ENCODE measurements at regions of chrX and their contacts with region 1.

Region 1: GRCh38 chrX:1749499-1749898 is 134.6 kb downstream of the ASMT start:
- DNase-seq: no peak
- H3K4me3 ChIP-seq: no peak overlapping the region
- H3K27ac ChIP-seq: no peak overlapping the region
- H3K4me1 ChIP-seq: no peaks in the 10 kb centered on the region
- H3K27me3 ChIP-seq: peaks cover 0 to 13% of the 10 kb centered on the region in 2 donors
- CTCF ChIP-seq: no peak
- POLR2A ChIP-seq: no peak

Region 2: DNA sequence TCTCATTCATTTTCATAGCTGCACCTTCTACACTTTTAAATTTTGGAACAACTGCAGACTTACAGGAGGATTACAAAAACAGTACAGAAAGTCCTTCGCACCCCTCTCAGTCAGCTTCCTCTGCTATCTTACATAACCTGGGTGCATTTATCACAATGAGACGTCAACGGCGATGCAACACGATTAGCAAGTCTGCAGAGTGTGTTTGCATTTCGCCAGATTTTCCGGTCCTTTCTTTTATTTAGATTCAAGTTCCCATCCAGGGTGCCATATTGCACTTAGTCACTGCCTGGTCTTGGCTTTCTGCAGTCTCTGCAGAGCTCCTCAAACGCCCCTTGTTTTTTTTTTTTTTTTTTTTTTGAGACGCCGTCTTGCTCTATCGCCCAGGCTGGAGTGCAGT is 48.7 kb before region 1 on chrX:
- intact Hi-C with region 1: loop called (anchors 2 kb)
- DNase-seq: no peak
- H3K4me3 ChIP-seq: no peak overlapping the region
- H3K27ac ChIP-seq: no peak overlapping the region
- H3K4me1 ChIP-seq: no peaks in the 10 kb centered on the region
- H3K27me3 ChIP-seq: no peaks in the 10 kb centered on the region
- CTCF ChIP-seq: no peak
- POLR2A ChIP-seq: no peak

Region 3: GRCh38 chrX:1841746-1842145 is 92.2 kb after region 1 on chrX:
- intact Hi-C with region 1: loop called (anchors 10 kb)
- DNase-seq: no peak
- H3K4me3 ChIP-seq: no peak overlapping the region
- H3K27ac ChIP-seq: no peak overlapping the region
- H3K4me1 ChIP-seq: no peaks in the 10 kb centered on the region
- H3K27me3 ChIP-seq: no peaks in the 10 kb centered on the region
- CTCF ChIP-seq: no peak
- POLR2A ChIP-seq: no peak

Region 4: GRCh38 chrX:3024176-3024575 is 1274.7 kb after region 1 on chrX:
- intact Hi-C with region 1: no loop called
- DNase-seq: no peak
- H3K4me3 ChIP-seq: no peak overlapping the region
- H3K27ac ChIP-seq: no peak overlapping the region
- H3K4me1 ChIP-seq: no peaks in the 10 kb centered on the region
- H3K27me3 ChIP-seq: no peaks in the 10 kb centered on the region
- CTCF ChIP-seq: no peak
- POLR2A ChIP-seq: no peak

Measured in breast epithelium (tissue), 4 donors.